K562 (cell line): ENCODE measurements at regions of chr9 and their contacts with region 1.

Region 1: GRCh38 chr9:116737152-116737546 is 50.0 kb downstream of the TRIM32 start:
- DNase-seq: peak; percentile 82 to 86 (median 84)
- ATAC-seq: peak; percentile 99
- H3K4me3 ChIP-seq: no peak overlapping the region
- H3K27ac ChIP-seq: no peak overlapping the region
- H3K4me1 ChIP-seq: no peaks in the 10 kb centered on the region
- H3K27me3 ChIP-seq: no peaks in the 10 kb centered on the region
- CTCF ChIP-seq: peak; percentile 88 to 91 (median 89)
- EP300 ChIP-seq: no peak
- POLR2A ChIP-seq: no peak
- RAD21 ChIP-seq: peak; percentile 76 to 89

Region 2: GRCh38 chr9:116860509-116861120 is 123.5 kb after region 1 on chr9:
- CTCF ChIA-PET with region 1: interaction called, 5 read pairs
- POLR2A ChIA-PET with region 1: no interaction called
- in situ Hi-C with region 1: loop called (anchors 10 kb)
- intact Hi-C with region 1: loop called (anchors 1 kb)
- DNase-seq: peak; percentile 52 to 80 (median 70)
- ATAC-seq: peak; percentile 88
- H3K4me3 ChIP-seq: no peak overlapping the region
- H3K27ac ChIP-seq: no peak overlapping the region
- H3K4me1 ChIP-seq: no peaks in the 10 kb centered on the region
- H3K27me3 ChIP-seq: no peaks in the 10 kb centered on the region
- CTCF ChIP-seq: peak; percentile 43 to 73 (median 62)
- EP300 ChIP-seq: no peak
- POLR2A ChIP-seq: no peak
- RAD21 ChIP-seq: peak; percentile 46 to 66

Region 3: DNA sequence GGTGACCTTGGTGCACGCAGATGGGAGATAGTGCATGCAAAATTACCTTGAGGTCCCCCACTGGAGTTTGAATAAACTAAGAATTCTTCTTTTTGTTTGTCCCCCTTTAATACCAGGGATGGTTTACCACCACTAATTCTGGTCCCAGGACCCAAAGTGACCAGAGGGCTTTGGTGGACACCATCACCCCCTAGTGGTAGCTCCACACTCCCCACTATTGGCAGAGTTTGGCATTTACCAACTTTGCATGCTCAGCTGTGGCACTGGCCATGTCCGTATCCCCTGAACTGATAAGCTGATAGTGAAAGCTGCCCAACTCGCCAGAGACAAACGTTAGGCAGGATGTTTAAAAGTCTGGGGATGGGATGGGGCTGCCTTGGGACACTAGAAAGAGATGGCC is 674.4 kb after region 1 on chr9:
- CTCF ChIA-PET with region 1: no interaction called
- POLR2A ChIA-PET with region 1: no interaction called
- in situ Hi-C with region 1: no loop called
- intact Hi-C with region 1: loop called (anchors 10 kb)
- DNase-seq: peak; percentile 1 to 27 (median 20)
- ATAC-seq: peak; percentile 58; the same call in 1 of the 3 replicates
- H3K4me3 ChIP-seq: no peak overlapping the region
- H3K27ac ChIP-seq: no peak overlapping the region
- H3K4me1 ChIP-seq: no peaks in the 10 kb centered on the region
- H3K27me3 ChIP-seq: no peaks in the 10 kb centered on the region
- CTCF ChIP-seq: peak; percentile 44 to 72 (median 49); a peak in 5 of 6 replicates
- EP300 ChIP-seq: no peak
- POLR2A ChIP-seq: no peak
- RAD21 ChIP-seq: peak in 1 of 2 experiments; percentile 15; a peak in 1 of 4 replicates